Left ventricle myocardium superior (tissue), 1 donor: ENCODE measurements at regions of chr14 and their contacts with region 1.

Region 1: GRCh38 chr14:71833476-71833875 is 98.8 kb upstream of the RGS6 start:
- DNase-seq: no peak
- ATAC-seq: no peak

Region 2: GRCh38 chr14:71339650-71340415 is 493.6 kb before region 1 on chr14:
- intact Hi-C with region 1: no loop called
- DNase-seq: no peak
- ATAC-seq: no peak

Region 3: DNA sequence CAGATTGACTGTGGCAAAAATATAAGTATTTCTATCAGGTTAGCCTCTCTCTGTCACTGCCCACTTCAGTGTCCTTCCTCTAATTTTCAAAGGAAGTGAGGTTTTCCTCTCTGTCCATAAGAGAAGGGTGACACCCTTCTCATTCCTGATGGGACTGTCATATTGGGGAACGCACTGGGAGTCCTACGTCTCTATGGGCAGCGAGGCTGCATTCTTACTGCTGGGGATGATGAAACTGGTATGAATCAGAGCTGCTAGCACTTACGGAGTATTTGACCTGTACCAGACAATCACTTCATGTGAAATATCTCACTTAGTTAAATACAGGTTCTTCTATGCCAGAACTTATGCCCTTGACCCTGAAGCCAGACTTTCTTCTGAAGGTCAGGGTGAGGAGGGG is 624.2 kb after region 1 on chr14:
- intact Hi-C with region 1: loop called (anchors 5 kb)
- DNase-seq: no peak
- ATAC-seq: no peak